HEK293T (cell line): ENCODE measurements at regions of chr20 and their contacts with region 1.

Region 1: GRCh38 chr20:22586645-22587310 is 2.4 kb upstream of the FOXA2 start:
- DNase-seq: peak; percentile 62

Region 2: DNA sequence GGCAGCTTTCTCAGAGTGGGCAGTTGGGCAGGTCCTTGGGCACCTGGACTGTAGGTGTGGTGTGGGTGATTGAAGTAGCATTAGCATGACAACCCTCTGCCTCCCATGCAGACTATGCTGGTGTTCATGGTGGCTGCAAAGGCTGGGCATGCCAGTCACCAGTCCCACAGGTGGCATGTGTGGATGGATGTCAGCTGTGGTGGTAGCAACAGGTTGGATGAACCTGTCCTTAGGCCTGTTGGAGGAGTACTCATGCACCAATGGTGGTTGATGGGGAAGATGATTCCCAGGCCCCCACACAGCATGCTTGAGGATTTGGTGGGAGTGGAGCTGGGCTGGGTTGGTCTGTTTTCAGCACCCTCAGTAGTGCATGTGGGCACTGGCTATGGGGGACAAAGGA is 630.2 kb before region 1 on chr20:
- CTCF ChIA-PET with region 1: no interaction called
- POLR2A ChIA-PET with region 1: no interaction called
- DNase-seq: no peak

Region 3: GRCh38 chr20:22333885-22334545 is 252.8 kb before region 1 on chr20:
- CTCF ChIA-PET with region 1: interaction called, 18 read pairs
- POLR2A ChIA-PET with region 1: no interaction called
- DNase-seq: peak; percentile 68

Region 4: DNA sequence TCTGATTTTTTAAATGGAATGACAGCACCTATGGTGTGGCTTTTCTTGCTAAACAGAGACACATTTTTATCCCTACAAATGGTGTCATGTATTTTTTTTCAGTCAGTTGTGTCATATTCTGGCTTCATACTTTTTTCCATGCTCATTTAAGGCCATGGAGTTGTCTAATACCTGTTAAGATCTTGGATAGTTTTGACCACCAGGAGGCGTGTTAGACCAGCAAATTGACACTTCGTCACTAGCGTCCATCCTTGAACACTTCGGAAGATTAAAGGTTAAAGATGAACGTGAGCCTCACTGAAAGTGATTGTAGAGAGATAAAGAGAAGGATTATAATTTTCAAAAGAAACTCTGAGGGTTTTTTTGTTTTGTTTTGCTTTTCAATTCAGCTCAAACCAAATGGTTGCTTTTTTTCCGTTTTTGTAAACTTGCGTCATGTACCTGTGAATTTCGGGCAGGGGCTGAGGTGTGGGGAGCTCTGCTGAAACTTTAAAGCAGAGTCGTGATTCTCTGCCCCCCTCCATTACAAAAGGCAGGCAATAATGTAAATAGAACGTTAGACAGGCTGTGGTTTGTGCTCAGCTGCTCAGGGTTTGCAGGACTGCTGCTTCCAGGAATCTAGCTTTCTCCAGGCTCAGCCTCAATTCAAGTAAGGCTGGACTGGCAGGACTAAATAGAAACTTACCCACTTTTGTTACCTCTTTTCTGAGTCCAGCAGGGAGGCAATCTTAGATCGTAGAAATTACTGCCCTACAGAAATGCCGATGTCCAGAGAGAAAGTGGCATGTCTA is 247.5 kb before region 1 on chr20:
- CTCF ChIA-PET with region 1: interaction called, 18 read pairs
- POLR2A ChIA-PET with region 1: no interaction called
- DNase-seq: peak; percentile 32

Region 5: DNA sequence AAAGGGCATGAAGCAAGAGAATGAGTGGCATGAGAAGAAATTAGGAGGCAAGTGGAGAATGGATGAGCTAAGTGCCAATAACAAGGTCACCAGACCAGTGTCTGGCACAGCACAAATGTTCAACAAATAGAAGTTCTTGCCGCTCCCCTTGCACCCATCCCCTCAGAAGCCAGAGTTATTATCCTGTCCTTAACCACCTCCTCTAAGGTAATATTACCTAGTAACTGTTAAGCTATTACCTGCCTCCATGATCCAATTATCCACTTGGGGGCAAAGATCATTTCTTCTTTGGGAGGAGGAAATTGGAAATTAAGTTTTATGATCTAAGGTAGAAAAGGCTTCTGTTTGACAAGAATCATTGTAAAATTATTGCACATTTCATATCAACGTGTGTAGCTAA is 136.2 kb before region 1 on chr20:
- CTCF ChIA-PET with region 1: interaction called, 10 read pairs
- POLR2A ChIA-PET with region 1: no interaction called
- DNase-seq: no peak

Region 6: DNA sequence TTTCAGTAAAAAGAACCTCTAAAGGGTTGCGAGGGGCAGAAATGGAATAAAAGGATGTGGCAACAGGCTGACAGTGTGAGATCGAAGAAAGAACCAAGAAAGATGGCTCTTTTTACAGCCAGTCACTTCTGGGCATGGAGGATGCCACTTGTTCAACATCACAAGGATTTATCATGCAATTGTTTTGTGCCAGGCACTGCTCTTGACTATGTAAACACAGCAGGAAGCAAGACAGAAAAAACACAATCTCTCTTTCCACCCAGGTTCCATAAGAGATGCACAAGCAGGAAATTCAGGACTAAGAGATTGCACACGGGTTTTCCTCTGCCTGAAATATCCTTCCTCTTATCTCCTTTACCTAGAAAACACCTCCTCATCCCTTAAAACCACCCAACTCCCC is 40.4 kb before region 1 on chr20:
- CTCF ChIA-PET with region 1: no interaction called
- POLR2A ChIA-PET with region 1: no interaction called
- DNase-seq: no peak

Region 7: GRCh38 chr20:22597303-22597702 is 10.5 kb after region 1 on chr20:
- CTCF ChIA-PET with region 1: interaction called, 10 read pairs
- POLR2A ChIA-PET with region 1: no interaction called
- DNase-seq: no peak

Region 8: DNA sequence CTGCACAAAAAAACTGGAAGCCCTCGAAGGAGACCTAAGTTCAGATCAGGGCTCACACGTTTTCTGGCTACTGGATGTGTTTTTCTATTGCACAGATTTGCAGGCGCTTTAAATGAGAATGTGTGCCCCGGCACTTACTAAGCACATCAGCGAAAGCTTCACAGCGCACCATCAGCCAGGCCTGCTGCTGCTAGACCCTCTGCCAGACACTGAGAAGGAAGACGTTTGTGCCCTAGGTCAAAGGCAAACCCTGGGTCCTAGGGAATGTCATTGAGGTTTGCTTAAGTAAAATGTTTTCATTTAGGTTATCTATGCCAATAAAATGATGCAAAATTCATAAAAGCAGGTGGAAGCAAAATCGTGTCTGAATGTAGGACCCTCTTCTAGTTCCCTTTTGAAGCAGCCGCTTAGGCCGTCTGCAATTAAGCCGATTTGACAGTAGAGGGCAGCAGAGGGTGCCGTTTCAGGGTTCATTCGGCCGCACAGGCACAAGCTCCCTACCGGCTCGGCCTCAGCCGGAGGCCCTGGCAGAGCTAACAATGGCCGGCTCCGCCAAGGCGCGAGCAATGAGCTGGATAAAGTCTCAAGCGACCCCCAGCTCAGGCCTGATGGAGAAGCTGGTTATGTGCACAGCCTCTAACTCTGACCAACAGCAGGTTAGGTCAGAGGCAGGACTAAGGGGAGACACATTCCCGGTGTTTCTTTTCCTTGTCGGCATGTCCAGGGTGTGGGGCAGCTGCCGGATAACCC is 104.8 kb after region 1 on chr20:
- CTCF ChIA-PET with region 1: no interaction called
- POLR2A ChIA-PET with region 1: no interaction called
- DNase-seq: peak; percentile 80